Endothelial cell of umbilical vein (primary cell): ENCODE measurements at regions of chr5 and their contacts with region 1.

Region 1: DNA sequence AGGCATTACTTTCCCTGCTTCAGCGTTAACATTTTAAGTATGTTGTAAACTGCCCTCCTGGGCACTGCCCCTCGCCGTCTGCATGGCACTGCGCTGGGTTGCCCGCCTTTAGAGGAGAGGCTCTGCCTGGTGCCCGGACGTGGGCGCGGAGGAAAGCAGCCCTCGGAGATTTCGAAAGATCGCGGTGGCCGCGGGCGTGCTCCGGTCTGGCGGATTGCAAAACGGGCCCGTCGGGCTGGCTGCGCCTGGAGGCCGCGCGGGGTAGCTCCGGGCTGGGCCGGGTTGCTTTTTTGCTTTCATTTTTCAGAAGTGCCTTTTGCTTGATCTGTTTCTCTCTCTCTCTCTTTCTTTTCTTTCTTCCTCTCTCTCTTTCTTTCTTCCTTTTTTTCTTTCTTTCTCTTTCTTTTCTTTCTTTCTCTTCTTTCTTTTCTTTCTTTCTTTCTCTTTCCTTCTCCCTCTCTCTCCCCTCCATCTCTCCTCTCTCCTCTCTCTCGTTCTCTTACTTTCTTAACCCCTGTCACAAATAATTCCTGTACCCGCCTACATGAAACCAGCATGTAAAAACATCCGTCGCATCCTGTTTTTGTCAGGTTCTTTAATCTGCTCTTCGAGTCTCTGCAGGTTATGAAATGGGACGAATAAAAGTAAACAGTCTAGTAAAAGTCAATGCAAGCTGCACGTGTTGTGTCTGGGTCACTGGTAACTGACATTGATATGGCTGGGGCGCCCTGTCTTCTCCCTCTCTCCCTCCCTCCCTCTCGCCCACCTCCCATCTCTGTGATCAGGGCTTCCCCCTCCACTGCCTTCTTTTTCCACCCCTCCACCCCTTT is 1.7 kb downstream of the FST start:
- DNase-seq: peak; percentile 62
- H3K4me3 ChIP-seq: peak overlapping the region; percentile 48 to 82 (median 64)
- H3K27ac ChIP-seq: no peak overlapping the region
- H3K4me1 ChIP-seq: peaks cover 20% of the 10 kb centered on the region
- H3K27me3 ChIP-seq: peaks cover under 1 to 47% of the 10 kb centered on the region in 2 experiments
- CTCF ChIP-seq: peak in 1 of 2 donors; percentile 35
- POLR2A ChIP-seq: peak; percentile 23

Region 2: DNA sequence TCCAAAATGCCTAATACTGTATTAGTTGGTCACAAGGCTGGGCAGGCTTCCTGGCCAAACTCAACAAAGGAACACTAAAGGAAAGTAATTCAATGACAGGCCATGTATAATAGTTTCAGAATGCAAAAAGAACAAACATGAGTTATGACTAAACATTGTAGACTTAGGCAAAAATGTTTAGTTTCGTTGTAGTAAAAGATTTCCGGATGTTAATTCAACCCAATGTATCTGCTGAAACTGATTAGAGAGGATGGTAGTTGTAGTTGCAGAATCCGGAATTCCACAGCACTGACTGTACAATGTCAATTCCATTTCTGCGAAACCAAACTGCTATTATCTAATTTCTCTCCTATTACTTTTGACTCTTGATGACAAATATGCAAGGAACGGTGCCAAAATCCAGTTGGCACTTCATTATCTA is 119.6 kb before region 1 on chr5:
- CTCF ChIA-PET with region 1: no interaction called
- POLR2A ChIA-PET with region 1: no interaction called
- dilution Hi-C with region 1: no loop called
- intact Hi-C with region 1: loop called (anchors 5 kb)
- DNase-seq: peak; percentile 92
- H3K4me3 ChIP-seq: no peak overlapping the region
- H3K27ac ChIP-seq: peak overlapping the region; percentile 82
- H3K4me1 ChIP-seq: peaks cover 12% of the 10 kb centered on the region
- H3K27me3 ChIP-seq: no peaks in the 10 kb centered on the region
- CTCF ChIP-seq: no peak
- POLR2A ChIP-seq: peak; percentile 46

Region 3: GRCh38 chr5:53560506-53561191 is 78.5 kb after region 1 on chr5 and contains the start of gene NDUFS4:
- CTCF ChIA-PET with region 1: no interaction called
- POLR2A ChIA-PET with region 1: no interaction called
- dilution Hi-C with region 1: no loop called
- intact Hi-C with region 1: loop called (anchors 2 kb)
- DNase-seq: peak; percentile 85
- H3K4me3 ChIP-seq: peak within 1 kb of the TSS; percentile 86 to 98 (median 89)
- H3K27ac ChIP-seq: peak within 1 kb of the TSS; percentile 63
- H3K4me1 ChIP-seq: peaks cover 10% of the 10 kb centered on the region
- H3K27me3 ChIP-seq: peaks cover 0 to 23% of the 10 kb centered on the region in 2 experiments
- CTCF ChIP-seq: no peak
- POLR2A ChIP-seq: peak; percentile 77
- total RNA-seq, gene NDUFS4: 76.2 and 79.1 TPM in 2 replicates

Region 4: GRCh38 chr5:53874409-53874808 is 392.3 kb after region 1 on chr5:
- CTCF ChIA-PET with region 1: interaction called, 11 read pairs
- POLR2A ChIA-PET with region 1: no interaction called
- dilution Hi-C with region 1: no loop called
- intact Hi-C with region 1: loop called (anchors 1 kb)
- DNase-seq: no peak
- H3K4me3 ChIP-seq: no peak overlapping the region
- H3K27ac ChIP-seq: no peak overlapping the region
- H3K4me1 ChIP-seq: no peaks in the 10 kb centered on the region
- H3K27me3 ChIP-seq: peaks cover 0 to under 1% of the 10 kb centered on the region in 2 experiments
- CTCF ChIP-seq: no peak
- POLR2A ChIP-seq: no peak

Region 5: GRCh38 chr5:54217826-54218503 is 735.9 kb after region 1 on chr5:
- CTCF ChIA-PET with region 1: interaction called, 6 read pairs
- POLR2A ChIA-PET with region 1: no interaction called
- dilution Hi-C with region 1: no loop called
- intact Hi-C with region 1: loop called (anchors 1 kb)
- DNase-seq: peak; percentile 78
- H3K4me3 ChIP-seq: no peak overlapping the region
- H3K27ac ChIP-seq: no peak overlapping the region
- H3K4me1 ChIP-seq: no peaks in the 10 kb centered on the region
- H3K27me3 ChIP-seq: no peaks in the 10 kb centered on the region
- CTCF ChIP-seq: peak; percentile 52 to 65
- POLR2A ChIP-seq: no peak

Region 6: GRCh38 chr5:54234304-54234933 is 752.3 kb after region 1 on chr5:
- CTCF ChIA-PET with region 1: interaction called, 22 read pairs
- POLR2A ChIA-PET with region 1: no interaction called
- dilution Hi-C with region 1: no loop called
- intact Hi-C with region 1: loop called (anchors 1 kb)
- DNase-seq: peak; percentile 38
- H3K4me3 ChIP-seq: no peak overlapping the region
- H3K27ac ChIP-seq: no peak overlapping the region
- H3K4me1 ChIP-seq: no peaks in the 10 kb centered on the region
- H3K27me3 ChIP-seq: peaks cover 0 to 5% of the 10 kb centered on the region in 2 experiments
- CTCF ChIP-seq: peak; percentile 21 to 36
- POLR2A ChIP-seq: no peak

Region 7: GRCh38 chr5:54590824-54591223 is 1108.7 kb after region 1 on chr5:
- CTCF ChIA-PET with region 1: no interaction called
- POLR2A ChIA-PET with region 1: no interaction called
- dilution Hi-C with region 1: no loop called
- intact Hi-C with region 1: no loop called
- DNase-seq: no peak
- H3K4me3 ChIP-seq: no peak overlapping the region
- H3K27ac ChIP-seq: no peak overlapping the region
- H3K4me1 ChIP-seq: no peaks in the 10 kb centered on the region
- H3K27me3 ChIP-seq: no peaks in the 10 kb centered on the region
- CTCF ChIP-seq: no peak
- POLR2A ChIP-seq: no peak